Endothelial cell of umbilical vein (primary cell): ENCODE measurements at regions of chr3 and their contacts with region 1.

Region 1: GRCh38 chr3:130699765-130700164 is 46.9 kb downstream of the PIK3R4 start:
- DNase-seq: peak; percentile 33
- H3K4me3 ChIP-seq: no peak overlapping the region
- H3K27ac ChIP-seq: peak overlapping the region; percentile 71
- H3K4me1 ChIP-seq: peaks cover 9% of the 10 kb centered on the region
- H3K27me3 ChIP-seq: no peaks in the 10 kb centered on the region
- CTCF ChIP-seq: peak in 1 of 2 donors; percentile 14
- POLR2A ChIP-seq: no peak

Region 2: DNA sequence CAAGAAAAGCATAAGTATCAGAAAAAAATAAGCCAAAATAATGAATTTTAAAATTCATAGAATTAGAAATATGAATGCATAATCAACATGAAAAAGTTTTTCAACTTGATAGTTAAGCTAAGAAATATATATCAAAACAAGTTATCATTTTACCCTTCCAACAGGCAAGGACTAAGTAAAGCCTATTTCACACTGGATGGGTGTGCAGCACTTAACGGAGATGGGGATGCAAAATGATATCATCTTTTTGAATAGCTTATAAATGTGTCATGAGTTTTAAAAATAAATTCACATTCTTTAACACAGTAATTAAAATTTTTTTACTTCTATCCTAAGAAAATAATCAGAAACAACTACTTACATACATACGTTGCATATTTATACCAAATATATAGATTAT is 26.0 kb after region 1 on chr3:
- CTCF ChIA-PET with region 1: interaction called, 4 read pairs
- POLR2A ChIA-PET with region 1: no interaction called
- dilution Hi-C with region 1: no loop called
- intact Hi-C with region 1: loop called (anchors 1 kb)
- DNase-seq: no peak
- H3K4me3 ChIP-seq: no peak overlapping the region
- H3K27ac ChIP-seq: no peak overlapping the region
- H3K4me1 ChIP-seq: peaks cover 11% of the 10 kb centered on the region
- H3K27me3 ChIP-seq: no peaks in the 10 kb centered on the region
- CTCF ChIP-seq: no peak
- POLR2A ChIP-seq: no peak

Region 3: DNA sequence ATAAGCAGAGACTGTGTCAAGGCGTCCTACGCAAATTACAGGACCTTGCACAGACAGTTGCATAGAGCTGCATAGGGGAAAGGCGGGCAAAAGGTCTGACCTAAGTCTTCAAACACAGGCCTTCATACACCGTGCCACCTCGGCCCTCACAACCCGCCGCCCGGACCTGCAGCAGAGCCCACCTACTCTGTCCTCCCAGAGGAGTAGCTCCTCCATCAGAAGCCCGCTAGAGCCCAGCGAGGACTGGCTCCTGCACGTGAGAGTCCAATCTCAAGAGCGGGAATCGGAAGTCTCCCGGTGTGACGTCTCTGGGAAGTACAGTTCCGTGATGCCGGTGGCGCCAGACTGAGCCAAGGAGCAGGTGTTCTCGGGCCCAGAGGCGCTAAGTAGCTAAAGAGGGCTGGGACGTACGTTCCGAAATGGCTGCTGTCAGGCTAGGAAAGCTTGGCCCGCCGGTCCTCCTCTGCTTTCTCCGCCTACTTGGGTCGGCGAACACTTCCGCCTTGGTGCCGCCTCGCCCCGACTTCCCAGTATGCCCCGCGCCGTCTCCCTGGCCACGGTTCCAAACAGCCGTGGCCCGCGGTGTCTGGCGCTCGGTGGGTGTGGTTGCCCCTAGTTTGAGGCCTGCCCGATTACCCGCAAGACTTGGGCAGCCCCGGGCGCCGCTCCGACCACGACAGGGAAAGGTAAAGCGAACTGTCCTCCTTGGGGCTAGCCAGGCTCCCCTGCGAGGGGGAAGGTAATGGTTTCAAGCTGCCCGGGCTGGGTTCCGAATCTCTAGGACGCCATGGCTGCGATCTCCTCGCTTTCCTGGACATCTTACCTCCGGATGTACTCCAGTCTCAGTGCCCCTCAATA is 326.8 kb after region 1 on chr3 and contains the starts of genes ASTE1 and NEK11:
- CTCF ChIA-PET with region 1: no interaction called
- POLR2A ChIA-PET with region 1: no interaction called
- dilution Hi-C with region 1: no loop called
- intact Hi-C with region 1: loop called (anchors 1 kb)
- DNase-seq: peak; percentile 84
- H3K4me3 ChIP-seq: peak within 1 kb of the TSS; percentile 44 to 72 (median 54)
- H3K27ac ChIP-seq: peak within 1 kb of the TSS; percentile 91
- H3K4me1 ChIP-seq: peaks cover 15% of the 10 kb centered on the region
- H3K27me3 ChIP-seq: no peaks in the 10 kb centered on the region
- CTCF ChIP-seq: no peak
- POLR2A ChIP-seq: peak; percentile 88
- total RNA-seq, gene ASTE1: 5.8 and 6.7 TPM in 2 replicates
- total RNA-seq, gene NEK11: 3.1 and 4.3 TPM in 2 replicates